AG04449 (cell line): ENCODE measurements at regions of chr12 and their contacts with region 1.

Region 1: GRCh38 chr12:95117178-95117599 is 43.8 kb upstream of the NR2C1 start:
- DNase-seq: no peak
- H3K4me3 ChIP-seq: no peak overlapping the region
- CTCF ChIP-seq: peak; percentile 35

Region 2: GRCh38 chr12:95102916-95103671 is 14.1 kb before region 1 on chr12:
- CTCF ChIA-PET with region 1: interaction called, 10 read pairs
- POLR2A ChIA-PET with region 1: no interaction called
- DNase-seq: no peak
- H3K4me3 ChIP-seq: no peak overlapping the region
- CTCF ChIP-seq: no peak

Region 3: DNA sequence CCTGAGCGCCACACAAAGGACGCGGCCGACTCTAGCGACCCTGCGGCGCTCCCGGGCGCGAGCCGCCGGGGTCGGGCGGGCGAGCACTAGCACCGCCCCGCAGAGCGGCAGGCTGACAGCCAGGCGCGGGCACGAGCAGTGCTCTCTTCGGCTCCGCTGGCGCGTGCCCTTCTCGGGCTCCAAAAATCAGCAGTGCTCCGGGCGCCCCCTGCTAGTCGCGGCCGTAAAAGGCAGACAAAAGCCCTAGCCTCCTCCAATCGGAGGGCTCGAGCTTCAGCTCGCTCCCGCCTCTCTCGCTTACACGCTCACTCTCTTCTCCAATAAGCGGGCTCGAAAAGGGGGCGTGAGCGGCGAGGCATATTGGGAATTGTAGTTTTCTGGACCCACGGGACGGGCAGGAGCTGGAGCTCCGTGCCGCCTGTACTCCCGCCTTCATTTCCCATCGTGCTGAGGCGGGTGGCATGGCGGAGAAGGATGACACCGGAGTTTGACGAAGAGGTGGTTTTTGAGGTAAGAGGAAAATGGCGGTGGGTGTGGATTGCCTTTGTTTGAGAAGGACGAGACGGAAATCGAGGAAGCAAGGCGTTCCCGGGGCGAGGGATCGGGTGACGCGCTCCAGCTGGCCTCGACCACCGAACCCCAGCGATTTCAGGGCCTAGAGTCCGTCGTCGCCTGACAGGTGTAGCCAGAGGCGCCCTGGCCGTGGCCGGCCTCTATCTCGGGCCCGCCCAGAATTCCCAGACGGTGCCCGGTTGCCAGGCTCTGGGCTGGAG is 100.4 kb after region 1 on chr12 and contains the starts of genes FGD6 and VEZT:
- CTCF ChIA-PET with region 1: interaction called, 36 read pairs
- POLR2A ChIA-PET with region 1: no interaction called
- DNase-seq: peak; percentile 92
- H3K4me3 ChIP-seq: peak within 1 kb of the TSS; percentile 85
- CTCF ChIP-seq: peak; percentile 73

Region 4: DNA sequence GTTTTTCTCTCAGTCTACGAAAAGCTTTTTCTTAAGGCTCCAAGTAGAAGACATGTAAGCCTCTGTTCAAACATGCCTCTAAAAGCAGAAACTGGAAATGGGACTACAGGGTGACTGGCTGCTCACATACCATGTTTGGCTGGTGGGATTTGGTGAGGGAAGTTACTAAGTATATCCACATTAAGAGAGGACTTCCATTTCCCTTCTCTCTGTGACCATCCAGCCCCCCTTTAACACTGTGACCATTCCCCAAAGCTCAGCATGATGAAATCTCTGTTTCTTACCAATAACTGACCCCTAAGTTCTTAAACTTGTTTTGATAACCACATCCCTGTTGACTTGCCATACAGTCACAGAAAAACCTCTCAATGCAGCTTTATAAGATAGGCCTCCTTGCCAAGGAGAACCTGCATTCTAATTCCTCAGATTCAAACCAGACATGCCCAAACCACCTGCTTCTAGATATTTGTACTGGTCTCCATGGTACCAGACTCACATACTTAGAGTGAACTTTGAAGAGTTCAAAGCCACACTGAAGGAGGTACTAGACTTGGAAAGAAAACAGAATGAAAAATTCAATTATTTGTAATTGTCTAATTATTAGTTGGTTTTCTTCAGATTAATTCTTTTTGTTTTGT is 202.6 kb after region 1 on chr12:
- CTCF ChIA-PET with region 1: interaction called, 10 read pairs
- POLR2A ChIA-PET with region 1: no interaction called
- DNase-seq: no peak
- H3K4me3 ChIP-seq: no peak overlapping the region
- CTCF ChIP-seq: no peak

Region 5: DNA sequence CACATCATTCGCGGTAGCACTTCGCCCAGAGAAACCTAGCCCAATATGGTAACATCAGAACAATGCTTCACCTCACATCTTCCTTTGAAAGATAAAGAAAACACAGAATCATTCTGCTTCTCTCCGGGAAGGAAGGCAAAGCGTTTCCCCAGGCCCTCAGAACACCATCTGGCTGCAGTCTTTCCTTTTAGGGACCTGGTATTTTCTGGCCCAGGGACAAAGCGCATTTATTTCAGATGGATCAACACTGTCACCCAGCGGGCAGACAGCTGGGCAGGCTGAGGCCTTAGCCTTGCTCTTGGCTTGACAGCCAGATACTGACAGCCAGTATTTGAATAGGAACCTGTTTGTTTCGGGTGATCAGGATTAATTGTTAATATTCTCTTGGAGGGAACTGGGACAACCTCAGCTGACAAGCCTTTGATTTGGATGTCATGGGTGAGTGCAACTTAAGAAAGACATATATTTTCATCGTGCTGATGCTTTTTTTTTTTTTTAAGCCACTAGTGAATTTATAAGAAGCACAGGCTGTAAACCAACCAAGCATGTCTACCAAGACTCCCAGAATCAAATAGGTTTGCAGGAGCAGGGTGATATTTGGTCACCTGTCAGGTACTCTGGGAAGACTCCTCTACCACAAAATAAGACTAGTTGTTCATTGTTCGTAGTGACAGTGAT is 219.3 kb after region 1 on chr12:
- CTCF ChIA-PET with region 1: interaction called, 142 read pairs
- POLR2A ChIA-PET with region 1: no interaction called
- DNase-seq: peak; percentile 46
- H3K4me3 ChIP-seq: no peak overlapping the region; the same call in 1 of the 2 replicates
- CTCF ChIP-seq: peak; percentile 94

Region 6: DNA sequence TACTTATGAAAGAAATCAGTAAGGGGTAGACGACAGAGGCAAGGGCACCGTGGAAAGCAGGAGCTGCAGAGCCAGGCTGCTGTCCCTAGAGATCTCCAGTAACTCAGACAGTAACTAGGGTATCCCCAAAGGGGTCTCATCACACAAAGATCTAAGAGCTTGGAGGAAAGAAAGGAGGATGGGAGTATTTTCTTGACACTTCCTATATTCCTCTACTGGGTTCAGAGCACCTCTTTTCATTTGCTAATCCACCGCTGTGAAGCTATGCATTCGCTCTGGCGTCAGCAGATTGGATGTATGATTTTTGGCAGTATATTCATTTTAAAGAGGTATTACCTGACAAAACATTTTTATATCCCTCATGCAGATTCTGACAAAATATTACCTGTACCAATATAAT is 421.5 kb after region 1 on chr12:
- CTCF ChIA-PET with region 1: interaction called, 26 read pairs
- POLR2A ChIA-PET with region 1: no interaction called
- DNase-seq: no peak
- H3K4me3 ChIP-seq: no peak overlapping the region
- CTCF ChIP-seq: no peak